ENCODE measurements at regions of chr2 and their contacts with region 1.

Region 1: DNA sequence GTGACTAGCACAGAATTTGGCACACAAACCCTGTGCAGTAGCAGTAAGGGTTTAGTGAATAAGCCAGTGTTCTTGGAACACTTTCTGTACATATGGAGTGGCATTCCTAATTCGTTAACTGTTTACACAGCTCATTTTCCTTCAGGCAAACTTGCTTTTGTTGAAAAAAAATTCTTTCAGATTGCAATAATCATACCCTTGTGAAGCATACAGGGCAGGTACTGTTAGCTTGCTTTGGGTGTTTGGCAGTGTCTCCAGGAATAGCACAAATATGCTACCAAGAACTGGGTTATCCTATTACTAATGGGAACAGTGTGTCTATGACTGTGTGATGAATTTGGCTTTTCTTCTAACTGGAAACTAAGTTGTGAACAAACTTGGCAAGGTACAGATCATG is 33.4 kb downstream of the UGP2 start:
- DNase-seq: no peak
- H3K4me3 ChIP-seq: no peak overlapping the region
- H3K27ac ChIP-seq: no peak overlapping the region
- H3K4me1 ChIP-seq: no peaks in the 10 kb centered on the region
- H3K27me3 ChIP-seq: no peaks in the 10 kb centered on the region
- CTCF ChIP-seq: no peak

Region 2: DNA sequence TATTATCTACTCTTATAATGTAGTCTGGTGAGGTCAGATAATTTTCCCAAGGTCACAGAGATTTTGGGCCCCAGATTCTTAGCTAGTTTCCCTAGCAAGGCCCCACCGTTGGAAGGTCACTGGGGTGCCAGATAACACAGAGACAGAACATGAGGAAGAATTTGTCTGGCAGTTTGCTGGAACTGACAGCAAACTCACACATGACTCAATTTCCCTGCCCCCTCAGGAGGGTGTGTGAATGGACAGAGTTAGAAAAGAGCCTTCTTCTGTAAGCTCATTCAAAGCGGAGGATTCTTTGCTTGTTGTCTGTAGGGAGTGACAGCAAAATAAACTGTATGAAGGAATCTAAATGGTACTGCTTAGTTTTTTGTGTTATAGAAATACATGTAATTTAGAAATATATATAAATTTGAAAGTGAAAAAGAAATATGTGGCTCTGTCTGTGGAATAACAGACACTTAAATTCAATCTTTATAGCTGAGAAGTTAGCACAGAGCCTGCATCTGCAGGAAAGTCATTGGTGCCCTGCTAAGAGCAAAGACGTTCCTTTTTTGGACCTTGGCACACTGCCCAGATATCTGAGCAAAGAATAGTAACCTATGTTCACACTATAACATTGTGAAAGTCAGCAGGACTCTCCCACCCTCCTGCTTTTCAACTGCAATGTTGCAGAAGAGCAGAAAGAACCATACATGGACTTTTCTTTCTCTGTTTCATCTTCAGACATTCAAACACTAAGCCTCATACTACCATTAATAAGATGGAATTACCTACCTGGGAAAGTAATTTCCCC is 284.3 kb before region 1 on chr2:
- intact Hi-C with region 1: loop called (anchors 10 kb)
- DNase-seq: peak; percentile 55
- H3K4me3 ChIP-seq: no peak overlapping the region
- H3K27ac ChIP-seq: no peak overlapping the region
- H3K4me1 ChIP-seq: no peaks in the 10 kb centered on the region
- H3K27me3 ChIP-seq: no peaks in the 10 kb centered on the region
- CTCF ChIP-seq: no peak

Measured in colonic mucosa (tissue), 4 donors.